ENCODE measurements at regions of chr14 and their contacts with region 1.

Region 1: GRCh38 chr14:85798856-85799255 is 268.9 kb downstream of the FLRT2 start:
- DNase-seq: no peak
- H3K4me3 ChIP-seq: no peak overlapping the region
- H3K27ac ChIP-seq: no peak overlapping the region
- H3K4me1 ChIP-seq: no peaks in the 10 kb centered on the region
- CTCF ChIP-seq: no peak

Region 2: GRCh38 chr14:85811340-85811739 is 12.5 kb after region 1 on chr14:
- CTCF ChIA-PET with region 1: no interaction called
- POLR2A ChIA-PET with region 1: interaction called, 13 read pairs
- intact Hi-C with region 1: no loop called
- DNase-seq: no peak
- H3K4me3 ChIP-seq: no peak overlapping the region
- H3K27ac ChIP-seq: no peak overlapping the region
- H3K4me1 ChIP-seq: no peaks in the 10 kb centered on the region
- CTCF ChIP-seq: no peak

Measured in OCI-LY7 (cell line).